ENCODE measurements at regions of chr12 and their contacts with region 1.

Region 1: DNA sequence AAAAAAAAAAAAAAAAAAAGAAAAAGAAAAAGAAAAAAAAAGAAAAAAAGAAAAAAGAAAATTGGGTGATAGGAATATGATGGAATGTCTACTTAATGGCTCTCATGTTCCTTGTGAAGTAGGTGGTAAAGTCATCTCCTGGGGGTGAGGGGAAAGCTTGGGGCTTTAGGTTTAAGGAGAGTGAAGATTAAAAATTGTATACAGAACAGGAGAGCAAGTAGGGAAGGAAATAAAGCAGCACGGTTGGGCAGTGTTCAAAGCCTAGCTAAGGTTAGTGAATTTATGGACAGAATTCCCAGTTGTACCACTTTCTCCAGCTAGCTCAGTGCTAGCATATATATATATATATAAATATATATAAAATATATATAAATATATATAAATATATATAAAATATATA is 40.0 kb upstream of the SLC2A13 start:
- DNase-seq: no peak
- H3K4me3 ChIP-seq: no peak overlapping the region
- H3K4me3 Mint-ChIP-seq: no peak overlapping the region
- H3K27ac ChIP-seq: no peak overlapping the region
- H3K27ac Mint-ChIP-seq: no peak overlapping the region
- H3K4me1 ChIP-seq: no peaks in the 10 kb centered on the region
- H3K4me1 Mint-ChIP-seq: no peaks in the 10 kb centered on the region
- H3K27me3 ChIP-seq: no peaks in the 10 kb centered on the region
- H3K27me3 Mint-ChIP-seq: peaks cover 0 to 8% of the 10 kb centered on the region in 2 donors

Region 2: GRCh38 chr12:39595923-39596322 is 550.0 kb before region 1 on chr12:
- CTCF ChIA-PET with region 1: no interaction called
- POLR2A ChIA-PET with region 1: interaction called, 10 read pairs
- DNase-seq: no peak
- H3K4me3 ChIP-seq: no peak overlapping the region
- H3K4me3 Mint-ChIP-seq: no peak overlapping the region
- H3K27ac ChIP-seq: no peak overlapping the region
- H3K27ac Mint-ChIP-seq: peak overlapping the region in 2 of 8 donors; percentile 31 to 63
- H3K4me1 ChIP-seq: no peaks in the 10 kb centered on the region
- H3K4me1 Mint-ChIP-seq: peaks cover 25 to 47% (median 25%) of the 10 kb centered on the region in 3 donors
- H3K27me3 ChIP-seq: no peaks in the 10 kb centered on the region
- H3K27me3 Mint-ChIP-seq: no peaks in the 10 kb centered on the region